H1 (cell line): ENCODE measurements at regions of chr9 and their contacts with region 1.

Region 1: DNA sequence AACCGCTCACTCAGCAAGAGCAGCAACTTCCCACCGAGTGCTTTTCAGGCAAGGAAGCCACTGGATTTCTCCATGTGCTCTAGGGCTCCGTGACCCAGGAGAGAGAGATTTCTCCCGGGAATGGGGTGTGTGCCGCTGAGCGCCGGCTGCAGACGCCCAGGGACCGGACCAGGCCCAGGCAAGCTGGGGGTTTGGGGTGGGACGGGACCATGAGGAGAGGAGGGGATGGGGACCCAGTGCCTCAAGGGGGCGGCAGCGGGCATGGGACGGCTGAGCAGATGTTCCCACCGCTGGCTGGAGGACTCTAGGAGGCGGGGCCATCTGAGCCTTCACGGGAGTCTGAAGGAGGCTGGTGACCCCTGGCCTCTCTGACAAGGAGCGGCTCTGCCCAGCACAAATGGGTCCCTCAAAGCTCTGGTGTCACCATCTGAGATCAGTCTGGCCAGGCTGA is 8.5 kb downstream of the LCN9 start:
- DNase-seq: peak; percentile 21 to 86
- H3K4me3 ChIP-seq: no peak overlapping the region
- H3K27ac ChIP-seq: no peak overlapping the region
- H3K4me1 ChIP-seq: no peaks in the 10 kb centered on the region; a peak in 1 of 7 replicates
- H3K27me3 ChIP-seq: no peaks in the 10 kb centered on the region
- CTCF ChIP-seq: peak in 2 of 3 experiments; percentile 66 to 71; a peak in 3 of 4 replicates
- EP300 ChIP-seq: no peak
- POLR2A ChIP-seq: no peak
- RAD21 ChIP-seq: peak; percentile 38 to 57

Region 2: DNA sequence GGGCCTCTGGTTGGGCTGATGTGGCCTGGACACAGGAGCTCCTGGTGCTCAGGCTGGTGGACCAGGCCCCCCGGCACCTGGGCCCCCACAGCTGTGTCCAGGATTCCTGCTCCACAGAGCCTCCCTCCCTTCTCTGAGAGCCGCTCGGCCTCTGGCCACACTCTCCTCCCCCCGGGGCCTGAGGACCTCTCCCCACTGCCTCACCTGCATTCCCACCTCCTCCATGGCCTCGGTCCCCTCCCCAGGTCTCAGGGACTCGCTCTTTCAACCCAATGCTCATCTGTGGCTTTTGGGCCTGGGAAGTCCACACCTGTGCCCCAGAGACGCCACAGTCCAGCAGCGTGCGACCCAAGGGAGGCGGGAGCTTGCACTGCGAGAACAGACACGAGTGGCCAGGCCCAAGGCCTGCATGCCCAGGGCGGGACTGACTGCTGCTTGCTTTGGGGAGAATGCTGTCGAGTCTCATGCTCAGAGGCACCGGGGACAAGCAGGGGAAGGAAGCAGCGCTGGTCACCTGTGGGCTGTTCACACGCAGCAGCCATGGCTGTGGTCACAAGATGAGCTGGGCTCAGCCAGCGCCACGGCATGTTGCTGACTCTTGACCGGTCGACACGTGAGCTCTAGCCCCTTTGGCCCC is 95.5 kb before region 1 on chr9:
- CTCF ChIA-PET with region 1: no interaction called
- POLR2A ChIA-PET with region 1: no interaction called
- DNase-seq: no peak
- H3K4me3 ChIP-seq: no peak overlapping the region
- H3K27ac ChIP-seq: no peak overlapping the region
- H3K4me1 ChIP-seq: no peaks in the 10 kb centered on the region
- H3K27me3 ChIP-seq: no peaks in the 10 kb centered on the region
- CTCF ChIP-seq: no peak
- EP300 ChIP-seq: no peak
- POLR2A ChIP-seq: no peak
- RAD21 ChIP-seq: no peak

Region 3: GRCh38 chr9:135692410-135692809 is 20.8 kb after region 1 on chr9:
- CTCF ChIA-PET with region 1: interaction called, 32 read pairs
- POLR2A ChIA-PET with region 1: interaction called, 3 read pairs
- DNase-seq: no peak
- H3K4me3 ChIP-seq: no peak overlapping the region
- H3K27ac ChIP-seq: no peak overlapping the region
- H3K4me1 ChIP-seq: peaks cover 0 to 5% (median 0%) of the 10 kb centered on the region in 4 experiments; a peak in 2 of 7 replicates
- H3K27me3 ChIP-seq: no peaks in the 10 kb centered on the region; a peak in 1 of 7 replicates
- CTCF ChIP-seq: no peak
- EP300 ChIP-seq: no peak
- POLR2A ChIP-seq: no peak
- RAD21 ChIP-seq: no peak